PC-3 (cell line): ENCODE measurements at regions of chr11 and their contacts with region 1.

Region 1: GRCh38 chr11:122655527-122656072 is at the start of gene UBASH3B:
- DNase-seq: peak; percentile 96
- ATAC-seq: peak; percentile 80
- H3K4me3 ChIP-seq: peak within 1 kb of the TSS; percentile 78
- H3K27ac ChIP-seq: peak within 1 kb of the TSS; percentile 76
- H3K4me1 ChIP-seq: peaks cover 37% of the 10 kb centered on the region
- H3K27me3 ChIP-seq: no peaks in the 10 kb centered on the region
- CTCF ChIP-seq: no peak
- total RNA-seq, gene UBASH3B: 148 and 178 TPM in 2 replicates

Region 2: GRCh38 chr11:122422707-122423106 is 232.9 kb before region 1 on chr11:
- CTCF ChIA-PET with region 1: no interaction called
- POLR2A ChIA-PET with region 1: no interaction called
- intact Hi-C with region 1: no loop called
- DNase-seq: peak; percentile 86
- ATAC-seq: peak; percentile 59
- H3K4me3 ChIP-seq: no peak overlapping the region
- H3K27ac ChIP-seq: peak overlapping the region; percentile 47
- H3K4me1 ChIP-seq: peaks cover 16% of the 10 kb centered on the region
- H3K27me3 ChIP-seq: peaks cover 40% of the 10 kb centered on the region
- CTCF ChIP-seq: no peak

Region 3: GRCh38 chr11:122642472-122642922 is 13.1 kb before region 1 on chr11:
- CTCF ChIA-PET with region 1: no interaction called
- POLR2A ChIA-PET with region 1: interaction called, 8 read pairs
- intact Hi-C with region 1: loop called (anchors 1 kb)
- DNase-seq: peak; percentile 98
- ATAC-seq: peak; percentile 89
- H3K4me3 ChIP-seq: peak overlapping the region; percentile 35
- H3K27ac ChIP-seq: peak overlapping the region; percentile 89
- H3K4me1 ChIP-seq: peaks cover 37% of the 10 kb centered on the region
- H3K27me3 ChIP-seq: no peaks in the 10 kb centered on the region
- CTCF ChIP-seq: no peak

Region 4: GRCh38 chr11:122709039-122709760 is 53.6 kb after region 1 on chr11:
- CTCF ChIA-PET with region 1: no interaction called
- POLR2A ChIA-PET with region 1: no interaction called
- intact Hi-C with region 1: loop called (anchors 5 kb)
- DNase-seq: peak; percentile 85
- ATAC-seq: peak; percentile 75
- H3K4me3 ChIP-seq: no peak overlapping the region
- H3K27ac ChIP-seq: peak overlapping the region; percentile 71
- H3K4me1 ChIP-seq: peaks cover 57% of the 10 kb centered on the region
- H3K27me3 ChIP-seq: no peaks in the 10 kb centered on the region
- CTCF ChIP-seq: no peak

Region 5: DNA sequence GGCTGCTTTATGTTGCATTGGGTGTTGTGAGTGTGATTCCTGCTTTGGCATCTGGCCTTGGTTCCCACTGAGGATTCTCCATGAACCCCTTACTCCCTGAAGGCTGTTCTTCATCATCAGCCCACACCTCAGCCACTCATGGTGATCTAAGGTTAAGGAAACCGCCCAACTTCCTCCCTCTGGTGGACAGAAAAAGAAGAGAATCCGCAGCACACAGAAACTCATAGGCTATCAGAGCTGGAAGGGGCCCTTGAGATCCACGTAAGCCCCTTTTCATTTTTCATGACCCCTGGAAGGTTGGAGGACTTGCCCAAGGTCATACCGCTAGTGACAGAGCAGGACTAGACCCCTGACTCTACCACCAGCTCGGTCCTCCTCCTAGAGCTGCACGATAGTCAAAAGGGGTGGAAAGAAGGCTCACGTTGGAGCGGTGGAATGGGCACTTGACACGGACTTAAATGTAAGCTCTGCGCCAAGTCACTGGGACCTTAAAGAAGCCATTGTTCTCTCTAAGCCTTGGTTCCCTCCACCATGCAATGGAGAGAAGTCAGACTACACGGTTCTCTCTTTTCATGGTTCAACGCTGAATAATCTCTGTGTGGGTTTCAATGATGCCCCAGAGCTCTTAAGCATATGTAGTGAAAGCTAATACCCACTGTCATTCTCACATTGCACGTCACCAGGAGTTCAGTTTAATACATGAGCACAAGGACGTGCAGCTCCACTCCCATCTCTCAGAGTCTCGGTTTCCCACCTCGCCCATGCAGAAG is 99.1 kb after region 1 on chr11:
- CTCF ChIA-PET with region 1: interaction called, 6 read pairs
- POLR2A ChIA-PET with region 1: interaction called, 3 read pairs
- intact Hi-C with region 1: loop called (anchors 1 kb)
- DNase-seq: peak; percentile 63
- ATAC-seq: peak; percentile 78
- H3K4me3 ChIP-seq: no peak overlapping the region
- H3K27ac ChIP-seq: no peak overlapping the region
- H3K4me1 ChIP-seq: no peaks in the 10 kb centered on the region
- H3K27me3 ChIP-seq: no peaks in the 10 kb centered on the region
- CTCF ChIP-seq: peak; percentile 84

Region 6: DNA sequence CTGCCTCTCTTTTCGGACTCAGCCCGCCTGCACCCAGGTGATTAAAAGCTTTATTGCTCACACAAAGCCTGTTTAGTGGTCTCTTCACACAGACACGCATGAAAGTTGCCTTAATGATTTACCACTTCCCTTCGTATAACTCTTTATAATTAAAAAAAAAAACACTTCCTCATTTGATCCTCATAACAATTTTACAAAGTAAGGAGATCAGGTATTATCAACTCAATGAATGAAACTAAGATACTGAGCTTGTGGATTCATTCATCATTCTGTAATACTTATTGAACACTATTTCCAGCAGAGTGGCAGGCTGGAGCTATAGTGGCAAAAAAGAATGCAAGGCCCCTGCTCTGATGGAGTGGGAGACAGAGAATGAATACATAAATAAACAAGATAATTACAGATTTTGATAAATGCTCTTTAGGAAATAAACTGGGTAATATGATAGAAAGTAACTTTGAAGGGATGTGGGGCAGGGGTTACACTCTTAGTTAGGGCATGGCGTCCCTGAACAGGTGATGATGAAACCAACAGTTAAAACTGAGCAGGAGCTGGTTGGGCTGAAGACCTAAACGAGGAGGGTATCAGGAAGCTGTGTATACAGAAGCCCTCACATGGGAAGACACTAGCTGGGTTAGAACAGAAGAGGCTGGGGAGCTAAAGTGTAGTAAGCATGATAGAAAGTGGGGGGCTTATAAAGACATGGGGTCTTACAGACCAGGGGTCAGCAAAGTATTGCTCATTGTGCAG is 177.3 kb after region 1 on chr11:
- CTCF ChIA-PET with region 1: no interaction called
- POLR2A ChIA-PET with region 1: no interaction called
- intact Hi-C with region 1: no loop called
- DNase-seq: no peak
- ATAC-seq: no peak
- H3K4me3 ChIP-seq: no peak overlapping the region
- H3K27ac ChIP-seq: no peak overlapping the region
- H3K4me1 ChIP-seq: no peaks in the 10 kb centered on the region
- H3K27me3 ChIP-seq: no peaks in the 10 kb centered on the region
- CTCF ChIP-seq: no peak